HAP-1 (cell line): ENCODE measurements at regions of chr2 and their contacts with region 1.

Region 1: GRCh38 chr2:170361090-170361936 is 183.4 kb downstream of the MYO3B start:
- DNase-seq: peak; percentile 63 to 78
- H3K4me3 ChIP-seq: no peak overlapping the region
- H3K4me1 ChIP-seq: peaks cover 18% of the 10 kb centered on the region
- H3K27me3 ChIP-seq: peaks cover 31% of the 10 kb centered on the region

Region 2: GRCh38 chr2:169887120-169887519 is 474.2 kb before region 1 on chr2:
- in situ Hi-C with region 1: no loop called
- DNase-seq: no peak
- H3K4me3 ChIP-seq: no peak overlapping the region
- H3K4me1 ChIP-seq: no peaks in the 10 kb centered on the region
- H3K27me3 ChIP-seq: no peaks in the 10 kb centered on the region

Region 3: GRCh38 chr2:170235860-170236679 is 125.2 kb before region 1 on chr2:
- in situ Hi-C with region 1: loop called (anchors 10 kb)
- DNase-seq: peak; percentile 66 to 72
- H3K4me3 ChIP-seq: no peak overlapping the region
- H3K4me1 ChIP-seq: peaks cover 11% of the 10 kb centered on the region
- H3K27me3 ChIP-seq: peaks cover 6% of the 10 kb centered on the region; the same call in 1 of the 2 replicates

Region 4: DNA sequence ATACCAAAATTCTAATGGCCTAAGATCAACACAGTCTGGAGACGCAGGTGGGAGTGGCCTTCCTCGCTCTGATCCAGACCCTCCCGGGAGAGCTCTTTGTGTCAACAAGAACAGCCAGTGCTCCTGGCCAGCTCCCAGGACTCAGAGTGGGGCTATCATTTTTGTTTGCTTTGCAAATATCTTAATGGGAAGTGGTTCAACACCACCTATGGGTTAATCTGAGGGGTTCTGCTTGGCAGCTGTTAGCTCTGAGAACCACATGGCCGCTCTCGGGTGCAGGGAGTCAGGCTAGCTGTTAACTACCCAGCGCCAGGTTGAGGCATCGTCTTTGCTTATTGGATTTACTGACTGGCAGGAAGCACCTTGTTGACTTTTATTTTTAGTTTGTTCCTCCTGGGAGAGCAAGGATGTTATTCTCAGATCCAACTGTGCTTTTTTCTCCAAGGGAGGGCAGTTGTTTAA is 169.0 kb after region 1 on chr2:
- in situ Hi-C with region 1: no loop called
- DNase-seq: peak; percentile 63 to 77
- H3K4me3 ChIP-seq: no peak overlapping the region
- H3K4me1 ChIP-seq: peaks cover 10% of the 10 kb centered on the region
- H3K27me3 ChIP-seq: no peaks in the 10 kb centered on the region

Region 5: GRCh38 chr2:170576296-170576695 is 215.0 kb after region 1 on chr2:
- in situ Hi-C with region 1: no loop called
- DNase-seq: no peak
- H3K4me3 ChIP-seq: no peak overlapping the region
- H3K4me1 ChIP-seq: no peaks in the 10 kb centered on the region
- H3K27me3 ChIP-seq: no peaks in the 10 kb centered on the region